ENCODE measurements at regions of chr13 and their contacts with region 1.

Region 1: GRCh38 chr13:32443111-32443510 is 15.2 kb upstream of the N4BP2L1 start:
- DNase-seq: peak; percentile 76
- ATAC-seq: peak; percentile 88
- H3K4me3 ChIP-seq: no peak overlapping the region
- H3K4me3 Mint-ChIP-seq: peak overlapping the region; percentile 12
- H3K27ac ChIP-seq: peak overlapping the region; percentile 19 to 55
- H3K27ac Mint-ChIP-seq: peak overlapping the region; percentile 67
- H3K4me1 ChIP-seq: peaks cover 13 to 15% of the 10 kb centered on the region in 2 donors
- H3K4me1 Mint-ChIP-seq: peaks cover 21% of the 10 kb centered on the region
- H3K27me3 ChIP-seq: no peaks in the 10 kb centered on the region
- H3K27me3 Mint-ChIP-seq: no peaks in the 10 kb centered on the region
- CTCF ChIP-seq: peak; percentile 72

Region 2: GRCh38 chr13:32164622-32165268 is 278.4 kb before region 1 on chr13:
- CTCF ChIA-PET with region 1: interaction called, 3 read pairs
- POLR2A ChIA-PET with region 1: no interaction called
- intact Hi-C with region 1: loop called (anchors 2 kb)
- DNase-seq: peak; percentile 39
- ATAC-seq: no peak
- H3K4me3 ChIP-seq: no peak overlapping the region
- H3K4me3 Mint-ChIP-seq: no peak overlapping the region
- H3K27ac ChIP-seq: no peak overlapping the region
- H3K27ac Mint-ChIP-seq: no peak overlapping the region
- H3K4me1 ChIP-seq: peaks cover 0 to 5% of the 10 kb centered on the region in 2 donors
- H3K4me1 Mint-ChIP-seq: peaks cover 9% of the 10 kb centered on the region
- H3K27me3 ChIP-seq: no peaks in the 10 kb centered on the region
- H3K27me3 Mint-ChIP-seq: no peaks in the 10 kb centered on the region
- CTCF ChIP-seq: no peak

Region 3: DNA sequence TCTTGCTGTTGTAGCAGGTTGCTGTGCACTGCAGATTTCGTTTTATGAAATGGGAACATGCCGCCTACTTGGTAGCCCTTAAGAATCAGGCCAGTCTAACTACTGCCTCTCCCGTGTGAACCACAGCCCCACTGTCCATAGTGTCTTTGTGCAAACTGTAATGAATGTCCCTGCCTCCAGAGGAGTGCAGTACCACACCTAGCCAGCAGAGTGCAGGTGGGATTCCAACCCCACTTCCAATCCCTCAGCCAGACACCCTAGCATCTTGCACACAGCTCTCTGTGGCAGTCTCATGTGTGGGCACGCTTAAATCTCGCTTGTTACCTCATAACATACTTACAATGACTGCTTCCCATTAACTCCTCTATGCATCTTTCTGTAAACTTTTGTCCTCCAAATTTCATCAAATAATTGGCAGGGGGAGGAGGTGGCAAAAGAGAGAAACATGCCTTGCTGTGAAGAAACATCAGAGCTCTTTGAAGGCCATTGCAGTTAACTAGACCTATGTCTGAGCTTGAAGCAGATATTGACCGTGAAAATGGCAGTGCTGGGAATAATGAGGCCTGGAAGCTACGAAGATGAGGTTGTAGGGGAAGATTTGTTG is 175.2 kb before region 1 on chr13:
- CTCF ChIA-PET with region 1: interaction called, 17 read pairs
- POLR2A ChIA-PET with region 1: no interaction called
- intact Hi-C with region 1: loop called (anchors 1 kb)
- DNase-seq: peak; percentile 55
- ATAC-seq: peak; percentile 81
- H3K4me3 ChIP-seq: no peak overlapping the region
- H3K4me3 Mint-ChIP-seq: no peak overlapping the region
- H3K27ac ChIP-seq: no peak overlapping the region
- H3K27ac Mint-ChIP-seq: no peak overlapping the region
- H3K4me1 ChIP-seq: no peaks in the 10 kb centered on the region
- H3K4me1 Mint-ChIP-seq: no peaks in the 10 kb centered on the region
- H3K27me3 ChIP-seq: no peaks in the 10 kb centered on the region
- H3K27me3 Mint-ChIP-seq: no peaks in the 10 kb centered on the region
- CTCF ChIP-seq: peak; percentile 82

Region 4: GRCh38 chr13:32381539-32381938 is 61.6 kb before region 1 on chr13:
- CTCF ChIA-PET with region 1: interaction called, 14 read pairs
- POLR2A ChIA-PET with region 1: no interaction called
- intact Hi-C with region 1: loop called (anchors 1 kb)
- DNase-seq: peak; percentile 37
- ATAC-seq: no peak
- H3K4me3 ChIP-seq: no peak overlapping the region
- H3K4me3 Mint-ChIP-seq: no peak overlapping the region
- H3K27ac ChIP-seq: no peak overlapping the region
- H3K27ac Mint-ChIP-seq: no peak overlapping the region
- H3K4me1 ChIP-seq: no peaks in the 10 kb centered on the region
- H3K4me1 Mint-ChIP-seq: no peaks in the 10 kb centered on the region
- H3K27me3 ChIP-seq: no peaks in the 10 kb centered on the region
- H3K27me3 Mint-ChIP-seq: no peaks in the 10 kb centered on the region
- CTCF ChIP-seq: peak; percentile 48